ENCODE measurements at regions of chr10 and their contacts with region 1.

Region 1: GRCh38 chr10:119650692-119651513 is at the start of gene BAG3:
- DNase-seq: peak; percentile 85
- ATAC-seq: peak; percentile 83
- H3K4me3 Mint-ChIP-seq: peak within 1 kb of the TSS; percentile 95
- H3K27ac Mint-ChIP-seq: peak within 1 kb of the TSS; percentile 98
- H3K4me1 Mint-ChIP-seq: peaks cover 37% of the 10 kb centered on the region
- H3K27me3 Mint-ChIP-seq: no peaks in the 10 kb centered on the region
- CTCF ChIP-seq: no peak
- total RNA-seq, gene BAG3: 13.4 to 14.3 TPM

Region 2: GRCh38 chr10:119596537-119597404 is 54.1 kb before region 1 on chr10 and contains the start of gene TIAL1:
- CTCF ChIA-PET with region 1: interaction called, 4 read pairs
- POLR2A ChIA-PET with region 1: interaction called, 3 read pairs
- intact Hi-C with region 1: loop called (anchors 5 kb)
- DNase-seq: peak; percentile 98
- ATAC-seq: peak; percentile 89
- H3K4me3 Mint-ChIP-seq: peak within 1 kb of the TSS; percentile 99
- H3K27ac Mint-ChIP-seq: peak within 1 kb of the TSS; percentile 98
- H3K4me1 Mint-ChIP-seq: peaks cover 48% of the 10 kb centered on the region
- H3K27me3 Mint-ChIP-seq: no peaks in the 10 kb centered on the region
- CTCF ChIP-seq: no peak
- total RNA-seq, gene TIAL1: 200 to 204 TPM

Region 3: GRCh38 chr10:119608316-119609155 is 42.4 kb before region 1 on chr10:
- CTCF ChIA-PET with region 1: interaction called, 11 read pairs
- POLR2A ChIA-PET with region 1: interaction called, 3 read pairs
- intact Hi-C with region 1: no loop called
- DNase-seq: peak; percentile 36
- ATAC-seq: no peak
- H3K4me3 Mint-ChIP-seq: no peak overlapping the region
- H3K27ac Mint-ChIP-seq: no peak overlapping the region
- H3K4me1 Mint-ChIP-seq: no peaks in the 10 kb centered on the region
- H3K27me3 Mint-ChIP-seq: peaks cover 1% of the 10 kb centered on the region
- CTCF ChIP-seq: peak; percentile 17

Region 4: GRCh38 chr10:119663866-119664616 is 13.1 kb after region 1 on chr10:
- CTCF ChIA-PET with region 1: interaction called, 12 read pairs
- POLR2A ChIA-PET with region 1: no interaction called
- intact Hi-C with region 1: no loop called
- DNase-seq: peak; percentile 31
- ATAC-seq: peak; percentile 79
- H3K4me3 Mint-ChIP-seq: peak overlapping the region; percentile 31
- H3K27ac Mint-ChIP-seq: peak overlapping the region; percentile 77
- H3K4me1 Mint-ChIP-seq: peaks cover 20% of the 10 kb centered on the region
- H3K27me3 Mint-ChIP-seq: no peaks in the 10 kb centered on the region
- CTCF ChIP-seq: no peak

Measured in activated CD8-positive, alpha-beta T cell treated with anti-CD3 and anti-CD28 coated beads for 36 hours (primary cell).